Vagina (tissue), 2 donors: ENCODE measurements at regions of chr10 and their contacts with region 1.

Region 1: GRCh38 chr10:103416436-103417147 is 20.2 kb downstream of the PDCD11 start:
- DNase-seq: no peak
- H3K4me3 ChIP-seq: no peak overlapping the region
- H3K27ac ChIP-seq: no peak overlapping the region
- H3K4me1 ChIP-seq: no peaks in the 10 kb centered on the region
- H3K27me3 ChIP-seq: no peaks in the 10 kb centered on the region
- CTCF ChIP-seq: peak; percentile 52 to 71 (median 68)
- POLR2A ChIP-seq: no peak

Region 2: DNA sequence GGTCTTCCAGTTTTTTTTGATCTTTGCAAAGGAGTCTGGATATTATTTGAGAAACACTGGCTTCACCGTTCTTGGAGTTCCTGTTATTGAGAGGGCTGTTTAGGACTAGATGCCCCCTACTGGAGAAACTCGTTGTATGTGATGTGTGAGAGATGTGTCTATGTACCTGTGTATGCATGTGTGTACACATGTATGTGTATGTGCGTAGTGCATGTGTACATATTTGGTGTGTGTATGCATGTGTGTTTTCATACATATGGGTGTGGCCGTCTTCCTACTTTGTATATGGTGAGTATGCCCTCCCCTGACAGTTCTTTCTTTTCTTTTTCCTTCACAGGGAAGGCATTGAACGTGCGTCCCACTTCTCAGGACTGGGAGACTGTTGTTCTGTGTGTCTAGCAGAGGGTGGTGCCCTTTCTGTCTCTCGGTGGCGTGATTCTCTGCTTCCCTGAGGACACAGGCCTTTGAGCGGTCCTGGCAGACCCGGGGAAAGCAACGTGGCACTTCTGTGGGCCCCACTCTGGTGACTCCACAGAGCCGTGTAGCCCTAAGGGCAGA is 65.5 kb after region 1 on chr10:
- intact Hi-C with region 1: loop called (anchors 2 kb)
- DNase-seq: no peak
- H3K4me3 ChIP-seq: no peak overlapping the region
- H3K27ac ChIP-seq: no peak overlapping the region
- H3K4me1 ChIP-seq: no peaks in the 10 kb centered on the region
- H3K27me3 ChIP-seq: no peaks in the 10 kb centered on the region
- CTCF ChIP-seq: peak; percentile 24 to 57 (median 44)
- POLR2A ChIP-seq: no peak

Region 3: DNA sequence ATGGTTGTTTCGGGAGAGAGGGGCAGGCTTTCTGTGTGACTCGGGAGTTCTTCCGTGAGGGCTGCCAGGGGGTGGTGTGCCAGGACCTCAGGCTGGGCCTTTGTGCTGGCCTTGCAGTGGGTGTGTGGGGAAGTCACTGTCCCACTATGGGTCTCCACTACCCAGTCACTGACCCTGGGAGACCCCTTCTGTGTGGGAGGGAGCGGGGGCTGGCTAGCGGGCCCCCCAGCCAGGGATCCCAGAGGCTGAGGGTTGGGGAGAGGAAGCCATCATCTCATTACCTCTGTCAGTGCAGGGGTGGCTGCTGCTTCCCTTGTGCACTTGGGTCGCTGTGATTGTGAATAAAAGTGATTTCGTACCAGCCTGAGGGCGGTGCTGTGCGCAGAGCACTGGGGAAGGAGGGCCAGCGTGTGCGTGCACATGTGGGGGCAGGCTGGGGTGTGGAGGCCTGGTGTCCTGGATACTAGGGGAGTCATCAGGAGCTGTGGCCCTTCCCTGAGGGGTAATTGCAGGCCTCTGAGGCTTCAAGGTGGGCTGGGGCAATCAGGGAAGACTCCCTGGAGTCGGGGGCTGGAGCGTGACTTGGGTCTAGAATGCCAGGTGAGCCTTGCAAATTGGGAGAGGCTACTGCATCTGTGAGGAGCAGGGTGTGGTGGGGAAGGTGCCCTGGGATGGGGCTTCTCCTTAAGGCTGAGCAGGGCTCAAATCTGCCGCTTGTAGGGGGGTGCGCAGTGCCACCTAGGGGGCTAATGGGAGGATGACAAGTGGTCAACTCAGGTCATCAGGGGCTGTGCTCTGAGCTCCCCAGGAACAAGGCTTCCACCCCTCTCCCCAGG is 175.8 kb after region 1 on chr10:
- intact Hi-C with region 1: loop called (anchors 10 kb)
- DNase-seq: no peak
- H3K4me3 ChIP-seq: no peak overlapping the region
- H3K27ac ChIP-seq: peak overlapping the region; percentile 47
- H3K4me1 ChIP-seq: no peaks in the 10 kb centered on the region
- H3K27me3 ChIP-seq: no peaks in the 10 kb centered on the region
- CTCF ChIP-seq: peak; percentile 20 to 46 (median 24)
- POLR2A ChIP-seq: no peak